CD14-positive monocyte (primary cell): ENCODE measurements at regions of chr14 and their contacts with region 1.

Region 1: DNA sequence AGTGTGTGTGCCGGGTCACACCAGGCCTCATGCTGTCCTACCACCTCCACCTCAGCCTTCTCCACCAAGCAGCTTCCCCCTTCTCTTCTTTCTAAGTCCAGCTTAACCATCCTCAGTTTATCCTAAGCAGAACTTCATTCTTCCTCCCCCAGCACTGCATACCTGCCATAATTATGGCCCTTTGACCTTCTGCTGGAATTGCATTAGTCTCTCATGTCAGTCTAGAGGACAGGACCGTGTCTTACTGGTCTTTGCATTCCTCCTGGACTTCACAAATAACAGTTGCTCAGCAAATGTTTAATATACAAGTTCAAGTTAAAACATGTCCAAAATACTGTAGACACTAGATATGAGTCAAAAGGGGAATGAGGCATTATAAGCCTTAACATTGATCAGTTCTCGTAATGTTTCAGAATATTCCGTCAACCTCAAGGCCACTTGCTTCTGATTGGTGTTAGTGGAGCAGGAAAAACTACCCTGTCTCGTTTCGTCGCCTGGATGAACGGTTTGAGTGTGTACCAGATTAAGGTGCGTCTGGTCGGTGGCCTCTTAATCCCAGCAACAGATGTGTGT is 60.0 kb downstream of the HSP90AA1 start:
- DNase-seq: no peak
- H3K4me3 ChIP-seq: no peak overlapping the region
- H3K4me3 Mint-ChIP-seq: no peak overlapping the region
- H3K27ac ChIP-seq: no peak overlapping the region
- H3K27ac Mint-ChIP-seq: peak overlapping the region in 1 of 7 donors; percentile 26
- H3K4me1 ChIP-seq: no peaks in the 10 kb centered on the region
- H3K4me1 Mint-ChIP-seq: no peaks in the 10 kb centered on the region
- H3K27me3 ChIP-seq: no peaks in the 10 kb centered on the region
- H3K27me3 Mint-ChIP-seq: peaks cover 0 to 2% (median 0%) of the 10 kb centered on the region in 3 donors
- CTCF ChIP-seq: no peak

Region 2: GRCh38 chr14:101992708-101993107 is 34.1 kb before region 1 on chr14:
- intact Hi-C with region 1: no loop called
- DNase-seq: peak; percentile 30 to 49 (median 42)
- H3K4me3 ChIP-seq: no peak overlapping the region
- H3K4me3 Mint-ChIP-seq: no peak overlapping the region
- H3K27ac ChIP-seq: peak overlapping the region; percentile 4 to 17
- H3K27ac Mint-ChIP-seq: peak overlapping the region in 6 of 7 donors; percentile 40 to 72 (median 53)
- H3K4me1 ChIP-seq: peaks cover 2 to 8% of the 10 kb centered on the region in 2 donors
- H3K4me1 Mint-ChIP-seq: peaks cover 10% of the 10 kb centered on the region
- H3K27me3 ChIP-seq: no peaks in the 10 kb centered on the region
- H3K27me3 Mint-ChIP-seq: no peaks in the 10 kb centered on the region
- CTCF ChIP-seq: no peak

Region 3: GRCh38 chr14:102011631-102012030 is 15.2 kb before region 1 on chr14:
- intact Hi-C with region 1: loop called in 1 of 2 experiments (anchors 1 kb)
- DNase-seq: no peak
- H3K4me3 ChIP-seq: no peak overlapping the region
- H3K4me3 Mint-ChIP-seq: no peak overlapping the region
- H3K27ac ChIP-seq: no peak overlapping the region
- H3K27ac Mint-ChIP-seq: peak overlapping the region in 1 of 7 donors; percentile 72
- H3K4me1 ChIP-seq: no peaks in the 10 kb centered on the region
- H3K4me1 Mint-ChIP-seq: no peaks in the 10 kb centered on the region
- H3K27me3 ChIP-seq: no peaks in the 10 kb centered on the region
- H3K27me3 Mint-ChIP-seq: peaks cover 0 to 2% (median 0%) of the 10 kb centered on the region in 3 donors
- CTCF ChIP-seq: no peak

Region 4: GRCh38 chr14:102279688-102280348 is 253.0 kb after region 1 on chr14:
- intact Hi-C with region 1: no loop called
- DNase-seq: no peak
- H3K4me3 ChIP-seq: no peak overlapping the region
- H3K4me3 Mint-ChIP-seq: no peak overlapping the region
- H3K27ac ChIP-seq: no peak overlapping the region
- H3K27ac Mint-ChIP-seq: no peak overlapping the region
- H3K4me1 ChIP-seq: no peaks in the 10 kb centered on the region
- H3K4me1 Mint-ChIP-seq: no peaks in the 10 kb centered on the region
- H3K27me3 ChIP-seq: no peaks in the 10 kb centered on the region
- H3K27me3 Mint-ChIP-seq: peaks cover 0 to 3% (median 0%) of the 10 kb centered on the region in 3 donors
- CTCF ChIP-seq: no peak